ENCODE measurements at regions of chr12 and their contacts with region 1.

Region 1: DNA sequence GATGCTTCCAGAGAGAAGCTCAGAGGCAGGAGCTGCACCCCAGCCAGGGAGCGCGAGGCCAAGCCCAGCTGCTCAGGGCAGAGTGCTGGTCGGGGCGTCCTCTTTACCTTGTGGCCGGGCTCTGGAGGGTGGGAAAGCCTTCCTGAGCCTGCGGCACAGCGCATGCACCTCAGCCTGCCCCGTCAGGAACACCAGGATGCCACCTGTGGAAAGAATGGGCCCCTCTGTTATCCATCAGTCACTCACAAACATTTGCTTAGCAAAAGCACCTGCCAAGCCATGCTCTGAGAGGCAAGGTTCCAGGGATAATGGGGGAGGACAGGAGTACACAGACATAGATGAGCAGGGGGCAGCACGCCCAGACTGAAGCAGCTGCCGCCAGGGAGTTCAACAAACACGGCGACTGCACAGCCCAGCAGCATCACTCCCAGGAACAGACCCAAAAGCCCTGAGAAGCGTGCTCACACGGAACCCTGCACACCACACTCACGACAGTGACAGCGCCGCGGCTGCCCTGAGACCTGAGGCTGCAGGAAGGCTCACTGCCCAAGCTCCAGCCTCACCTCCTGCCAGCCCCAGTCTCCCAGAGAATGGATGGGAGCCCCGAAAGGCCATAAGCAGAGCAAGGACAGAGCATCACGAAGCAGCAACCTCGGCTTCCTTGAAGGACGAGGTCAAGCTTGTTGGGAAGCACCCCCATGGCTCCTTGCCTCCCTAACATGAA is 21.8 kb downstream of the DHX37 start:
- DNase-seq: no peak
- H3K4me3 ChIP-seq: no peak overlapping the region
- H3K27ac ChIP-seq: no peak overlapping the region
- H3K4me1 ChIP-seq: no peaks in the 10 kb centered on the region
- H3K27me3 ChIP-seq: no peaks in the 10 kb centered on the region
- CTCF ChIP-seq: no peak
- EP300 ChIP-seq: no peak
- POLR2A ChIP-seq: no peak
- RAD21 ChIP-seq: no peak

Region 2: DNA sequence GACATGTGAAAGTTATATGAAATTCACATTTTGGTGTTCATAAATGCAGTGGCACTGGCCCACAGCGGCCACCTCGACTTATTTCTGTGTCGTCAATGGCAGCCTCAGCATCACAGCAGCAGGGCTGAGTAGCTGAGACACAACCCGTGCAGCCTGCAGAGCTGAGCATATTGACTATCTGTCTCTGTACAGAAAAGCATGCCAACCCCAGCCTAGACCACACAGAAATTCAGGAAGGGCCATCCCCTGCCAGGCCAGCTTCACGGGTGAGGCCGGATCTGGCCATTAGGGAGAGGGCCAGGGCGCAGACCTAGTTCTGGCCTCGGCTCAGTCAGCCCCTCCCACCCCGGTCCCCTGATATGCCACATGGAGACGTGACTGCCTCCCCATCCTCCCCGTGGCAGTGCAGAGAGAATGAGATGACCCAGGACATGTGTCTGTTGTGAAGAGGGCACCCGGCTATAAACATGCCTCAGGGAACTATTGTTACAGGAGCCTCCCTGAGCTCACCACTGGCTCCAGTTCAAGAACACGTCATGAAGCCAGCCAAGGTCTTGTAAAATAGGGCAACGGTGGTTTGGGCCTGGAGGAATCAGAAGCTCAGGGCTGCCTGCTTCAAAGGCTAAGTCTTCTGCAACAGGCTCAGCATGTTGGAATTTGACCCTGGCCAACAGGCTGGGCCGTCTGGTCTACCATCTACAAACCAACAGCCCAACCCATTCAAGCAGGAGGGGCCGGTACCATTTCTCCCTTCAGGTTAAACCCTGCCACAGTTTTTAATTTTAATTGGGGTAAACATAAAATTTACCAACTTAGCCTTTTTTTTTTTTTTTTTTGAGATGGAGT is 129.0 kb before region 1 on chr12:
- CTCF ChIA-PET with region 1: no interaction called
- POLR2A ChIA-PET with region 1: no interaction called
- DNase-seq: no peak
- H3K4me3 ChIP-seq: no peak overlapping the region
- H3K27ac ChIP-seq: no peak overlapping the region
- H3K4me1 ChIP-seq: peaks cover 0 to 21% (median 16%) of the 10 kb centered on the region in 4 experiments; a peak in 6 of 7 replicates
- H3K27me3 ChIP-seq: no peaks in the 10 kb centered on the region
- CTCF ChIP-seq: no peak
- EP300 ChIP-seq: no peak
- POLR2A ChIP-seq: no peak
- RAD21 ChIP-seq: no peak

Region 3: GRCh38 chr12:124952801-124953200 is 14.4 kb before region 1 on chr12:
- CTCF ChIA-PET with region 1: no interaction called
- POLR2A ChIA-PET with region 1: interaction called, 12 read pairs
- DNase-seq: no peak
- H3K4me3 ChIP-seq: no peak overlapping the region
- H3K27ac ChIP-seq: no peak overlapping the region
- H3K4me1 ChIP-seq: no peaks in the 10 kb centered on the region
- H3K27me3 ChIP-seq: no peaks in the 10 kb centered on the region
- CTCF ChIP-seq: no peak
- EP300 ChIP-seq: no peak
- POLR2A ChIP-seq: no peak
- RAD21 ChIP-seq: no peak

Measured in H1 (cell line).